ENCODE measurements at regions of chr3 and their contacts with region 1.

Region 1: GRCh38 chr3:12484198-12484974 is at the start of gene TSEN2:
- DNase-seq: peak; percentile 96
- H3K4me3 ChIP-seq: peak within 1 kb of the TSS; percentile 51 to 59 (median 58)
- H3K27ac ChIP-seq: no peak within 1 kb of the TSS
- H3K4me1 ChIP-seq: peaks cover 23% of the 10 kb centered on the region
- H3K27me3 ChIP-seq: no peaks in the 10 kb centered on the region
- CTCF ChIP-seq: no peak
- POLR2A ChIP-seq: peak; percentile 86
- total RNA-seq, gene TSEN2: 12.1 and 12.6 TPM in 2 replicates

Region 2: DNA sequence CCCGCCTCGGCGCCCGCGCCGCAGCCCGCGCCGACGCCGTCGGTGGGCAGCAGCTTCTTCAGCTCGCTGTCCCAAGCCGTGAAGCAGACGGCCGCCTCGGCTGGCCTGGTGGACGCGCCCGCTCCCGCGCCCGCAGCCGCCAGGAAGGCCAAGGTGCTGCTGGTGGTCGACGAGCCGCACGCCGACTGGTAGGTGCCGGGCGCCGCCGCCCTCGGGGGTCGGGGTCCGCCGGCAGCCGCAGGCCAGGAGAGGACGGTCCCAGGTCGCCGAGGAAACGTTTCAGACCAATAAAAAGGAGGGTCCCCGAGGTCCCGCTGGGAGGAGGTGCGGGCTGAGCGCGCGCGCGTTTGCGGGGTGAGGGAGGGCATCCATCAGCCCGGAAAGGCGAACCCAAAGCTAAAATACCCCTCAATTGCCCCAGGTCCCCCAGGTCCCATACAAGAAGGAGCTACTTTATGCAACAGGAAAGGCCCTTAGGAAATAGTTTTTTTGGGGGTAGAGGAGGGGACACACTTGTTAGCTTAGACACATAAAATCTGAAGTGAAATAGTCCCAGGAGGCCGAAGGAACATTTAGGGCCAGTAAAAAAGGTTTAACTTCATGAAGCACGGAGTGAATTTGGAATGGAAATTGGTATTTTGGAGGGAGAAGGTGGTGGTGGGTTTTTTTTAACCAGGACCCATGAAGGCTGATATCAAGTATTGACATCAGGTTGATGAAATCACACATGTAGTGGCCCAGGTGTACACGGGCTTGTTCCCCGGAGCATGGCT is 479.5 kb before region 1 on chr3:
- CTCF ChIA-PET with region 1: no interaction called
- POLR2A ChIA-PET with region 1: no interaction called
- dilution Hi-C with region 1: no loop called
- intact Hi-C with region 1: loop called (anchors 1 kb)
- DNase-seq: no peak
- H3K4me3 ChIP-seq: no peak overlapping the region
- H3K27ac ChIP-seq: no peak overlapping the region
- H3K4me1 ChIP-seq: no peaks in the 10 kb centered on the region
- H3K27me3 ChIP-seq: peaks cover 29 to 53% of the 10 kb centered on the region in 2 experiments
- CTCF ChIP-seq: no peak
- POLR2A ChIP-seq: no peak

Region 3: GRCh38 chr3:12175844-12176453 is 308.4 kb before region 1 on chr3:
- CTCF ChIA-PET with region 1: interaction called, 101 read pairs
- POLR2A ChIA-PET with region 1: no interaction called
- dilution Hi-C with region 1: no loop called
- intact Hi-C with region 1: loop called (anchors 1 kb)
- DNase-seq: peak; percentile 52
- H3K4me3 ChIP-seq: no peak overlapping the region
- H3K27ac ChIP-seq: no peak overlapping the region
- H3K4me1 ChIP-seq: peaks cover 32% of the 10 kb centered on the region
- H3K27me3 ChIP-seq: no peaks in the 10 kb centered on the region
- CTCF ChIP-seq: peak; percentile 68 to 90
- POLR2A ChIP-seq: no peak

Region 4: GRCh38 chr3:12405432-12406272 is 78.7 kb before region 1 on chr3:
- CTCF ChIA-PET with region 1: interaction called, 7 read pairs
- POLR2A ChIA-PET with region 1: no interaction called
- dilution Hi-C with region 1: no loop called
- intact Hi-C with region 1: loop called (anchors 1 kb)
- DNase-seq: peak; percentile 98
- H3K4me3 ChIP-seq: peak overlapping the region in 1 of 3 experiments; percentile 10
- H3K27ac ChIP-seq: peak overlapping the region; percentile 61
- H3K4me1 ChIP-seq: peaks cover 24% of the 10 kb centered on the region
- H3K27me3 ChIP-seq: no peaks in the 10 kb centered on the region
- CTCF ChIP-seq: no peak
- POLR2A ChIP-seq: no peak

Region 5: GRCh38 chr3:12556671-12557472 is 72.5 kb after region 1 on chr3 and contains the start of gene MKRN2:
- CTCF ChIA-PET with region 1: no interaction called
- POLR2A ChIA-PET with region 1: no interaction called
- dilution Hi-C with region 1: no loop called
- intact Hi-C with region 1: loop called (anchors 1 kb)
- DNase-seq: peak; percentile 89
- H3K4me3 ChIP-seq: peak within 1 kb of the TSS; percentile 86 to 98 (median 89)
- H3K27ac ChIP-seq: peak within 1 kb of the TSS; percentile 56
- H3K4me1 ChIP-seq: peaks cover 21% of the 10 kb centered on the region
- H3K27me3 ChIP-seq: no peaks in the 10 kb centered on the region
- CTCF ChIP-seq: no peak
- POLR2A ChIP-seq: peak; percentile 98
- total RNA-seq, gene MKRN2: 26.4 and 27.3 TPM in 2 replicates